ENCODE measurements at regions of chr22 and their contacts with region 1.

Region 1: GRCh38 chr22:18077639-18078328 is at the start of gene PEX26:
- DNase-seq: peak; percentile 87
- ATAC-seq: peak; percentile 96
- H3K4me3 ChIP-seq: peak within 1 kb of the TSS; percentile 87 to 97
- H3K27ac ChIP-seq: peak within 1 kb of the TSS; percentile 76
- H3K4me1 ChIP-seq: peaks cover 14 to 23% of the 10 kb centered on the region in 2 experiments
- H3K27me3 ChIP-seq: no peaks in the 10 kb centered on the region
- CTCF ChIP-seq: no peak
- POLR2A ChIP-seq: no peak
- RAD21 ChIP-seq: no peak
- total RNA-seq, gene PEX26: 26.4 TPM

Region 2: DNA sequence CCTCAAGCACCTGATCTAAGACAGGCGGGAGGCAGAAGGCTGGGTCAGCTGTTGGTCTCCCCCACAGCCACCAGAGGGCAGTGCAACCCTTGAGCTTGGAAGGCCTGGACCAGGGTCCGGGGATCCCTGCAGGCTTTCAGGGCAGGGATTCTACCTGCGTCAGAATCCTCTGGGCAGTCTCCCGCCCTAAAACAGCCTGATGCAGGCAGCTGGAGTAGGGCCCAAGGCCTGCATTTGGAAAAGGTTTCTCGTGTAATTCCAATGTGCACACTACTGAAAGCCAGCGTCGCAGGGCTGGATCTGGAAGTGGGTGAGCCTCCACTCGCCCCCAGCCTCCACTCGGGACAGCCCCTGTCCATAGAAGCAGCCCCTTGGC is 335.3 kb before region 1 on chr22:
- CTCF ChIA-PET with region 1: interaction called, 25 read pairs
- POLR2A ChIA-PET with region 1: no interaction called
- RAD21 ChIA-PET with region 1: interaction called in 1 of 2 experiments, 4 read pairs
- intact Hi-C with region 1: loop called (anchors 2 kb)
- DNase-seq: peak; percentile 59
- ATAC-seq: peak; percentile 96
- H3K4me3 ChIP-seq: no peak overlapping the region
- H3K27ac ChIP-seq: no peak overlapping the region
- H3K4me1 ChIP-seq: no peaks in the 10 kb centered on the region
- H3K27me3 ChIP-seq: no peaks in the 10 kb centered on the region
- CTCF ChIP-seq: peak; percentile 40 to 90 (median 76); a peak in 5 of 6 replicates
- POLR2A ChIP-seq: no peak
- RAD21 ChIP-seq: peak; percentile 67

Region 3: DNA sequence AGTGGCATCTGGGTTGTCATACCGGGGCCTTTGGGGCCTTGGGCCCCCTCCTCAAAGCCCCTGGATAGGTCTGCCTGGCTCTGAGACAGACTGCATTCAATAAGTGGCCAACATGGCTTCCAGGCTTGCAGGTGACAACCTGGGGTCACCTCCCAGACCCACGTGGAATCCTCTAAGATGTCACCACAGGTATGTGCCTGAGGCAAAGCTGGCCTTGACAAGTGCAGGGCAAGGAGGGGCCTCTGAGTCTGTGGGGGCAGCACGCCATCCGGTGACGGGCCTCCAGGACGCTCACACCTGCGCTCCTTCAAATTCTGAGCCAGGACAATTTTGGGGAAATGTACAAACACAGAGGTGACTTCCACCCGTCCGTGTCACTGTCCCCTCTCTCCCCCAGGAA is 283.6 kb before region 1 on chr22:
- CTCF ChIA-PET with region 1: no interaction called
- POLR2A ChIA-PET with region 1: no interaction called
- RAD21 ChIA-PET with region 1: no interaction called
- intact Hi-C with region 1: no loop called
- DNase-seq: no peak
- ATAC-seq: no peak
- H3K4me3 ChIP-seq: no peak overlapping the region
- H3K27ac ChIP-seq: no peak overlapping the region
- H3K4me1 ChIP-seq: no peaks in the 10 kb centered on the region
- H3K27me3 ChIP-seq: no peaks in the 10 kb centered on the region
- CTCF ChIP-seq: no peak
- POLR2A ChIP-seq: no peak
- RAD21 ChIP-seq: no peak

Region 4: GRCh38 chr22:17830043-17830961 is 247.5 kb before region 1 on chr22:
- CTCF ChIA-PET with region 1: interaction called, 121 read pairs
- POLR2A ChIA-PET with region 1: interaction called, 3 read pairs
- RAD21 ChIA-PET with region 1: interaction called, 3 to 12 read pairs
- intact Hi-C with region 1: loop called (anchors 1 kb)
- DNase-seq: peak; percentile 52
- ATAC-seq: peak; percentile 97
- H3K4me3 ChIP-seq: no peak overlapping the region
- H3K27ac ChIP-seq: no peak overlapping the region
- H3K4me1 ChIP-seq: no peaks in the 10 kb centered on the region
- H3K27me3 ChIP-seq: no peaks in the 10 kb centered on the region
- CTCF ChIP-seq: peak; percentile 77 to 99 (median 98); a peak in 5 of 6 replicates
- POLR2A ChIP-seq: no peak
- RAD21 ChIP-seq: peak; percentile 90

Region 5: GRCh38 chr22:18001040-18001893 is 76.5 kb before region 1 on chr22:
- CTCF ChIA-PET with region 1: interaction called, 8 read pairs
- POLR2A ChIA-PET with region 1: no interaction called
- RAD21 ChIA-PET with region 1: no interaction called
- intact Hi-C with region 1: loop called (anchors 2 kb)
- DNase-seq: peak; percentile 99
- ATAC-seq: peak; percentile 89
- H3K4me3 ChIP-seq: peak overlapping the region; percentile 66 to 84
- H3K27ac ChIP-seq: peak overlapping the region; percentile 85
- H3K4me1 ChIP-seq: peaks cover 29 to 42% of the 10 kb centered on the region in 2 experiments
- H3K27me3 ChIP-seq: no peaks in the 10 kb centered on the region
- CTCF ChIP-seq: peak; percentile 3 to 36 (median 28); a peak in 2 of 6 replicates
- POLR2A ChIP-seq: peak; percentile 91
- RAD21 ChIP-seq: no peak

Measured in HCT116 (cell line).